Vagina (tissue), 2 donors: ENCODE measurements at regions of chr5 and their contacts with region 1.

Region 1: GRCh38 chr5:171571663-171572062 is 152.2 kb downstream of the FGF18 start:
- DNase-seq: no peak
- H3K4me3 ChIP-seq: no peak overlapping the region
- H3K27ac ChIP-seq: no peak overlapping the region
- H3K4me1 ChIP-seq: no peaks in the 10 kb centered on the region
- H3K27me3 ChIP-seq: no peaks in the 10 kb centered on the region
- CTCF ChIP-seq: no peak
- POLR2A ChIP-seq: no peak

Region 2: DNA sequence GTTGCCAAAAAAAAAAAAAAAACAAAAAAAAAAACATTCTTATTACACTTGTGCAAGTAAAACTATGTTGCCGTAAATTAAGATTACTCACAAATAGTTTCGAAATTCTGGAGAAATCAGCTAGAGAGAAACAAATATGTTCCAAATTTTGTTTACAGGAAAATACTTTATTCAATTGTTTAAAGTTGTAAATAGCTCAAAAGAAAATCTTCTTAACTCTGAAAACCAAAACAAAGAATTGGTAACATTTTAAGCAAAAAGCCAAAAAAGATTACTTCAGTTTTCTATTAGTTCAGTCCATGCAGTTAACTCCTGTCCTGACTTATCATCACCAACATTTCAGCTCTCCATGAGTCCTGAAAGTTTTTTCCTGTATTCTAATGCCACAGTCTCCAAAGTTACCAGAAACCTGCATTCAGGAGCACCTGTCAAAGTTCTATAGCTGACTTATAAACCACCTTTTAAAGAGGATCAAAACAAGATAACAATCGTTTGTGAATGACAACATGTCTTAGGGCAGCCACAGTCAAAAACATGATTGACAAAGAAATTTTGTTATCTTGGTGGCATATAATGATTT is 515.7 kb before region 1 on chr5:
- intact Hi-C with region 1: no loop called
- DNase-seq: no peak
- H3K4me3 ChIP-seq: no peak overlapping the region
- H3K27ac ChIP-seq: no peak overlapping the region
- H3K4me1 ChIP-seq: no peaks in the 10 kb centered on the region
- H3K27me3 ChIP-seq: no peaks in the 10 kb centered on the region
- CTCF ChIP-seq: no peak
- POLR2A ChIP-seq: no peak

Region 3: DNA sequence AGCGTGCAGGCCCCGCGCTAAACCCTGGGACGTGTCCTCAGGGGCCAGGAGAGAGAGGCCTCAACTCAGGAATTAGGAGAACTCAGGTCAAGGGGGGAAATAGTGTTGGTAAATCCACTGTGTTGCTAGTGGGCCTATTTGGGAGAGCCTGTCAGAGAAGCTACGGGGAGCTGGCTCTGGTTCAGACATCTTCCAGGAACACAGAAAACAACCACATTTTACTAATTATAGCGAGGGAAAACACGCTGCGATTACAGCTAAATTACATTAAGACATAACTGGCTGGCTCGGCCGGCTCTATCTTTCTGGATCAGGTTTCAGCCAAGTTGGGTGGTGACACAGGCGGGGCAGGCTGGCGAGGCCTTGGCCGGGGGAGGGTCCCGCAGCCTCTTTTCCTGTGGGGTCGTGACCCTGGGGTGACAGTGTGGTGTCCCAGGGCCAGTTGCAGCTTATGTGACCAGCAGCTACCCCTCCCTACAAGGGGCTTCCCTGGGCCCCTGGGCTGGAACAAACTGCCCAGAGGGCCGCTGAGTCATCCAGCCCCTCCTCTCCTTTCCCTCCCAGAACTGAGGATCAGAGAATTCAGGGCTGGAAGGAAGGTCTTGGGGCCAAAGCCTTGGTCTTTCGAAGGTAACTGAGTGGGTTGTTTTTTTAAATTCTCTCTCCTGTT is 77.1 kb before region 1 on chr5:
- intact Hi-C with region 1: loop called (anchors 10 kb)
- DNase-seq: no peak
- H3K4me3 ChIP-seq: peak overlapping the region in 1 of 2 donors; percentile 7
- H3K27ac ChIP-seq: peak overlapping the region; percentile 77
- H3K4me1 ChIP-seq: peaks cover 21% of the 10 kb centered on the region
- H3K27me3 ChIP-seq: no peaks in the 10 kb centered on the region
- CTCF ChIP-seq: no peak
- POLR2A ChIP-seq: no peak

Region 4: GRCh38 chr5:171521219-171521633 is 50.4 kb before region 1 on chr5:
- intact Hi-C with region 1: no loop called
- DNase-seq: peak in 1 of 2 donors; percentile 94
- H3K4me3 ChIP-seq: no peak overlapping the region
- H3K27ac ChIP-seq: peak overlapping the region; percentile 80
- H3K4me1 ChIP-seq: peaks cover 37% of the 10 kb centered on the region
- H3K27me3 ChIP-seq: no peaks in the 10 kb centered on the region
- CTCF ChIP-seq: no peak
- POLR2A ChIP-seq: no peak

Region 5: DNA sequence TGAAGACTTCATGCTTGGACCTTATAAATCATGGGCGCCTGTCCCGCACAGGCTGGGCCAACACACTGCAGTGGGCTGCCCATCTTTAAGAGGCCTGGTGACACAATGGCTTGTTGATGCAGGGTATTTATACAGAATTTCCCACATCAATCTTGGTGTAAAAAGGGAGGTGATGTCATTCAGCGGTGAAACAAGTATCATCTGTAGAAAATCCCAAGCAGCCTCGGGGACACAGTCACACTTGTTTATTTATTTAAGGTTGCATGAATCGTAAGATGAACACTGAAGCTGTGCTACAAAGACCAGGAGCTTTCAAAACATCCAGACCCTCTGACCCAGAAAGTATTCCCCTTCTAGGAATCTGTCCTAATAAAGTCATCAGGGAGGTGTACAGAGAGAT is 254.5 kb after region 1 on chr5:
- intact Hi-C with region 1: no loop called
- DNase-seq: no peak
- H3K4me3 ChIP-seq: no peak overlapping the region
- H3K27ac ChIP-seq: no peak overlapping the region
- H3K4me1 ChIP-seq: no peaks in the 10 kb centered on the region
- H3K27me3 ChIP-seq: no peaks in the 10 kb centered on the region
- CTCF ChIP-seq: no peak
- POLR2A ChIP-seq: no peak